ENCODE measurements at regions of chr3 and their contacts with region 1.

Region 1: DNA sequence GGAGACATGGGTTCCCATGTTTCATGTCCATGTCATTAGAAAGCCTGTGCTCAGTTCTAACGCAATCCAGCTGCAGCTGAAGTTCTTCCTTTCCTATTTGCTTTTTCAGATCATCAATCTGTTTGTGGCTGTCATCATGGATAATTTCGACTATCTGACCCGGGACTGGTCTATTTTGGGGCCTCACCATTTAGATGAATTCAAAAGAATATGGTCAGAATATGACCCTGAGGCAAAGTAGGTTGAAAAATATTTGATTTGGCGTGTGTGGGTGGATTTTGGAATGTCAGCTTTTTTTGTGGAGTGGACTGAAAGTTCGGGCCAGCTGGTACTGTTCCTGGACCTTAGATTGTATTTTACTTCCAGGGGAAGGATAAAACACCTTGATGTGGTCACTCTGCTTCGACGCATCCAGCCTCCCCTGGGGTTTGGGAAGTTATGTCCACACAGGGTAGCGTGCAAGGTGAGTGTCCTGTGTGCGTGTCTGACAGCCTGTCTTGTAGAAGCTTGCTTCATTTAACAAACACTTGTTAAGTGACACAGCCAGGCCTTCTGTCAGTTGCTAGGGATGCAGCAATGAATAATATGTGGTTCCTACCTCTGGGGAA is 69.6 kb downstream of the CHDH start:
- DNase-seq: peak; percentile 77
- H3K4me3 ChIP-seq: no peak overlapping the region
- H3K27ac ChIP-seq: peak overlapping the region; percentile 33
- H3K4me1 ChIP-seq: peaks cover 28% of the 10 kb centered on the region
- H3K27me3 ChIP-seq: no peaks in the 10 kb centered on the region
- CTCF ChIP-seq: no peak

Region 2: GRCh38 chr3:53795789-53796560 is 19.4 kb after region 1 on chr3:
- CTCF ChIA-PET with region 1: no interaction called
- dilution Hi-C with region 1: no loop called
- in situ Hi-C with region 1: no loop called
- intact Hi-C with region 1: loop called (anchors 2 kb)
- DNase-seq: no peak
- H3K4me3 ChIP-seq: no peak overlapping the region
- H3K27ac ChIP-seq: no peak overlapping the region
- H3K4me1 ChIP-seq: peaks cover 23% of the 10 kb centered on the region
- H3K27me3 ChIP-seq: no peaks in the 10 kb centered on the region
- CTCF ChIP-seq: no peak